SK-N-SH (cell line): ENCODE measurements at regions of chr3 and their contacts with region 1.

Region 1: DNA sequence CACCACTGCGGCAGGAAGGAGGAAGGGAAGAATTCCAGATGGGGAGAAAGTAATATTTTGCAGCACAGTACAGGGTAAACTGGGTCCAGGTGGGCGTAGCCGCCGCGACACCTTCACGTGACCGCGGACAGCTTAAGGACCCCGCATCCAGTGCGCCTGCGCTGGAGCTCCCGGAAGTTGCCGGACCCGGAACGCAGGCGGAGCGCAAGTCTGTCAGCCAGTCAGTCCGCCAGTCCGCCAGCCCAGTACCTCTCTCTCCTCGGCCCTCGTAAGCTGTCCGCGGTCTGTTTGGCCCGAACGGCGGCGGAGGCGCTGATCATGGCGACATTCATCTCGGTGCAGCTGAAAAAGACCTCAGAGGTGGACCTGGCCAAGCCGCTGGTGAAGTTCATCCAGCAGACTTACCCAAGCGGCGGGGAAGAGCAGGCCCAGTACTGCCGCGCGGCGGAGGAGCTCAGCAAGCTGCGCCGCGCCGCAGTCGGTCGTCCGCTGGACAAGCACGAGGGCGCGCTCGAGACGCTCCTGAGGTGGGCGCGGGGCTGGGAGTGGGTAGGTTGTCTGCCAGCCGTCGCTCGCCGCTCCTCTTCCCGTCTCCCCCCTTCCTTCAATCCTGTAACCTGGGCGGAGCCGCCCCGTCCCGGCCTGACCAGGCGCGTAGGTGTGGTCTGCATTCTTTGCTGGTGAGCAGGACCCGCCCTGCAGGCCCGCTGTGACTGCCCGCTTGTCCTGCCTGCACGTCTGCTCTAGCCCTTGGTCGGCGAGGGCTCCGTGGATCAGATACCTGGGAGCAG is at the start of gene PDCD6IP:
- DNase-seq: peak; percentile 93
- H3K4me3 ChIP-seq: peak within 1 kb of the TSS; percentile 96 to 99
- H3K27ac ChIP-seq: peak within 1 kb of the TSS; percentile 95
- H3K4me1 ChIP-seq: peaks cover 6 to 15% of the 10 kb centered on the region in 2 experiments; a peak in 3 of 4 replicates
- H3K27me3 ChIP-seq: no peaks in the 10 kb centered on the region
- CTCF ChIP-seq: peak; percentile 11
- EP300 ChIP-seq: peak in 1 of 2 experiments; percentile 6; a peak in 1 of 4 replicates
- RAD21 ChIP-seq: no peak
- polyA plus RNA-seq, gene PDCD6IP: 49.1 and 60.4 TPM in 2 replicates

Region 2: DNA sequence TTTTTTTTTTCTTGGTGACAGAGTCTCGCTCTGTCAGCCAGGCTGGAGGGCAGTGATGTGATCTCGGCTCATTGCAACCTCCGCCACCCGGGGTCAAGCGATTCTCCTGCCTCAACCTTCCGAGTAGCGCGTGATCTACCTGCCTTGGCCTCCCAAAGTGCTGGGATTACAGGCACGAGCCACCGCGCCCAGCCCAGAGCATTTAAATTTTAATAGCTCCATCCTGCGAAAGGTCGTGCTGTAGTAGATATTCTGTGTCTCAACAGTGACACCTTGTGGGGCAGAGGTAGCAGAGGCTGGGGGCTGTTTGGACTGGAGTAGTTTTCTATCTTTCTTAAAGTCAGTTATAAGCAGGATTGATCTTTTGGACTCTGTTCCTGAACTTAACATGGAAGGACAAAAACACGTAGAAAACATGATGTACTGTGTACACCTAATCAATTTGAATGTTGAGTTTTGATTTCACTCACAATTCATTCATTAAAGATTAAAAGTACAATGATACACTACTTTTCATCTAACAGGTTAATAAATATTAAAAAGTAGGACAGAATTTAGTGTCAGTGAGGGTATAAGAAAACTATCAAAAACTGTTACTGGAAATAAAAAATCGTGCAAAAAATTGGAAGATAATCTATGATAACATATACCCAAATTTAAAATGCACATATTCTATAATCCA is 11.1 kb before region 1 on chr3:
- CTCF ChIA-PET with region 1: interaction called, 26 read pairs
- POLR2A ChIA-PET with region 1: interaction called, 3 read pairs
- DNase-seq: peak; percentile 64
- H3K4me3 ChIP-seq: peak overlapping the region; percentile 39 to 55
- H3K27ac ChIP-seq: no peak overlapping the region
- H3K4me1 ChIP-seq: peaks cover 4 to 6% of the 10 kb centered on the region in 2 experiments; a peak in 2 of 4 replicates
- H3K27me3 ChIP-seq: no peaks in the 10 kb centered on the region
- CTCF ChIP-seq: peak; percentile 90
- EP300 ChIP-seq: no peak
- RAD21 ChIP-seq: peak; percentile 86

Region 3: DNA sequence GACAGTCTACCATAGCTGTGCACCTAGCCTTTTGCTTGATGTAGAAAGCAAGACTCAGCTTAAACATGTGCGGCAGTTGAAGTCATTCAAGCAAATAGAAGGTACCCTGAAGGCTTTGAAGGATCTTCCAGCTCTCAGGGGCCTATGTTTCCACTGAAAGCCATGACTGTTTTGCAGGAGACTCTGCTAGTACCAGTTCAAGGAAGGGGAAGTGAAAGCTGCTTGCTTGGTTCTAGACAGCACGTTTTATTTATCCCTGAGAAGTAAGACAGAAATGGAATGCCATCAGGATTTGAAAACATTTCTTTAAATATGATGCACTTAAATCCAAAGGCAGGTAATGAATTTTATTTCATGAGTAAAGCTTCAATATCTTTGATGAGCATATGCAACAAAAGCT is 311.2 kb after region 1 on chr3:
- CTCF ChIA-PET with region 1: no interaction called
- POLR2A ChIA-PET with region 1: no interaction called
- DNase-seq: no peak
- H3K4me3 ChIP-seq: no peak overlapping the region
- H3K27ac ChIP-seq: no peak overlapping the region
- H3K4me1 ChIP-seq: peaks cover 0 to 2% of the 10 kb centered on the region in 2 experiments; a peak in 1 of 4 replicates
- H3K27me3 ChIP-seq: no peaks in the 10 kb centered on the region
- CTCF ChIP-seq: no peak
- EP300 ChIP-seq: no peak
- RAD21 ChIP-seq: no peak